Right ventricle myocardium inferior (tissue), 1 donor: ENCODE measurements at regions of chrX and their contacts with region 1.

Region 1: DNA sequence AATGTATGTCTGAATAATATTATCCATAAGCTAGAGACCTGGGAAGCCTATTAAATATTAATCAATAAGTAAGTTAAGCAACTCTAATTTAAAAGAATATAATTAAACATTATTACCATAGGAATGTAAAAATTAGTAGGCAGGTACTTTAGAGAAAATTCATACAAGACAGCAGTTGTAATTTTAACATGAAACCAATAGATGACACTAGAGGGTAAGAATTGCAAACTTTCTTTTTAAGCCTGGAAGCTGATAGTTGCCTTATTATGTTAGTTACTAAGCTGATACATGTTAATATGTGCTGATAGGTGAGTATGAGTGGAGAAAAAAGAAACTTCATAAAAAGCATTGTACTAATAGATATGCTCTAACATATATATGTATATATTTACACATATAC is 1157.4 kb downstream of the FAM133A start:
- DNase-seq: no peak
- ATAC-seq: no peak

Region 2: GRCh38 chrX:94515009-94515408 is 316.4 kb before region 1 on chrX:
- intact Hi-C with region 1: no loop called
- DNase-seq: no peak
- ATAC-seq: no peak

Region 3: GRCh38 chrX:94751611-94752010 is 79.8 kb before region 1 on chrX:
- intact Hi-C with region 1: no loop called
- DNase-seq: no peak
- ATAC-seq: no peak

Region 4: GRCh38 chrX:95076449-95076848 is 245.1 kb after region 1 on chrX:
- intact Hi-C with region 1: loop called (anchors 5 kb)
- DNase-seq: no peak
- ATAC-seq: no peak